Gastrocnemius medialis (tissue), 4 donors: ENCODE measurements at regions of chr16 and their contacts with region 1.

Region 1: GRCh38 chr16:9102379-9102778 is 10.9 kb downstream of the HAPSTR1 start:
- DNase-seq: no peak
- ATAC-seq: no peak
- H3K4me3 ChIP-seq: no peak overlapping the region
- H3K27ac ChIP-seq: peak overlapping the region; percentile 2 to 99 (median 38)
- H3K4me1 ChIP-seq: peaks cover 98 to 99% of the 10 kb centered on the region in 2 donors
- H3K27me3 ChIP-seq: no peaks in the 10 kb centered on the region
- CTCF ChIP-seq: no peak
- POLR2A ChIP-seq: no peak

Region 2: GRCh38 chr16:8885674-8886592 is 216.4 kb before region 1 on chr16:
- in situ Hi-C with region 1: no loop called
- intact Hi-C with region 1: loop called (anchors 10 kb)
- DNase-seq: peak in 1 of 2 donors; percentile 78
- ATAC-seq: peak in 1 of 2 donors; percentile 40
- H3K4me3 ChIP-seq: no peak overlapping the region
- H3K27ac ChIP-seq: peak overlapping the region; percentile 8 to 81 (median 40)
- H3K4me1 ChIP-seq: peaks cover 11 to 36% of the 10 kb centered on the region in 2 donors
- H3K27me3 ChIP-seq: peaks cover 0 to 8% (median 7%) of the 10 kb centered on the region in 3 donors
- CTCF ChIP-seq: no peak
- POLR2A ChIP-seq: peak; percentile 44 to 47

Region 3: GRCh38 chr16:9053006-9053601 is 49.3 kb before region 1 on chr16:
- in situ Hi-C with region 1: no loop called
- intact Hi-C with region 1: loop called (anchors 5 kb)
- DNase-seq: peak; percentile 50 to 81
- ATAC-seq: peak; percentile 57 to 90
- H3K4me3 ChIP-seq: peak overlapping the region in 1 of 4 donors; percentile 36
- H3K27ac ChIP-seq: peak overlapping the region; percentile 22 to 69 (median 62)
- H3K4me1 ChIP-seq: peaks cover 11 to 28% of the 10 kb centered on the region in 2 donors
- H3K27me3 ChIP-seq: no peaks in the 10 kb centered on the region
- CTCF ChIP-seq: no peak
- POLR2A ChIP-seq: no peak